ENCODE measurements at regions of chr19 and their contacts with region 1.

Region 1: DNA sequence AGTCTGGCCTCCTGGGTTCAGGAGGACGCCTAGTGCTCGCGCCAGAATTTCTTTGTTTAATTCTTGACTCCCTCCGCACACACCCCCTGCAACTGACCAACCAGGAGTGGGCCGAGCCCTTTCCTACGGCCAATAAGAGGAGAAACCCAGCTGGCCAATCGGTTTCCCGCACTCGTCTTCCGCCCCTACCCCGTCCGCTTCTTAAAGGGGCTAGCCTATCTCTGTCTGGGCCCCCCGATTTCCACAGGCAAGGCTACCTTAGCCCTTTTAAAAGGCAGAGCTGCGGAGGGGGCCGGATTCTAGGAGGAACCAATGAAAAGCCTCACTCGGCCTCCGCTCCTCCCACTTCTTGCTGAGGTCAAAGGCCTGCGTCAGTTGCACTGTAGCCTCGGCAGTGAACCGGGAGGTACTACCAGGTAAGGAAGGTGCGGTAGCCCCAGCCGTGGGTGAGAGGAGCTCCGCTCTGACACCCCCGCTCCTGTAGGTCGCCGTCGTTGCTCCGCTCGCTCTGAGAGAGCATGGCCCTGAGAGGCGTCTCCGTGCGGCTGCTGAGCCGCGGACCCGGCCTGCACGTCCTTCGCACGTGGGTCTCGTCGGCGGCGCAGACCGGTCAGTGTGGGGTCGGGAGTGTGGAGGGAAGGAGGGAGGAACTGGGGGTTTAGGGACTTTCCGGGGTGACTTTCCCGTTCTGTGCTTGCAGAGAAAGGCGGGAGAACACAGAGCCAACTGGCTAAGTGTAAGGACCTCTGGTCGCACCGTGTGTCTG is at the start of gene GCDH:
- DNase-seq: peak; percentile 99
- H3K4me3 ChIP-seq: peak within 1 kb of the TSS; percentile 91
- H3K27ac ChIP-seq: peak within 1 kb of the TSS; percentile 50
- H3K4me1 ChIP-seq: peaks cover 14% of the 10 kb centered on the region
- CTCF ChIP-seq: no peak
- total RNA-seq, gene GCDH: 31.5 and 40.7 TPM in 2 replicates

Region 2: DNA sequence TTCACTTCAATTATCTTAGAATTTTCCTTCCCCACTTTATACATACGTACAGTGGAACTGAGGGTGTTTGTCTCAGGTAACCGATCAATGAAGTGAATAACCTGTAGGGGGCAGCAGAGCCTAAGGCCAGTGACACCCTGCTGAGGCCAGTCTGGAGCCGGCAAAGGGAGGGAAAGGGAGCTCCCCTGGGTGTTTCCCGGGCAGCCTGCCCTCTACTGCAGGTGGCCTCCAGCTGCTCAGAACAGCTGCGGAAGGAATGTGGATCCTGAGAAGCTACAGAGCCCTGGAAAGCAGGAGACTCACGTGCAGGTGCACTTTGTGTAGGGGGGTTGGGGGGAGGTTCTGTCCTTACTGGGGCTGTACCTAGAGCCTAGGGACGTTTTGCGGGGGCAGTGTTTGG is 1093.5 kb before region 1 on chr19:
- CTCF ChIA-PET with region 1: no interaction called
- POLR2A ChIA-PET with region 1: no interaction called
- intact Hi-C with region 1: no loop called
- DNase-seq: peak; percentile 90
- H3K4me3 ChIP-seq: peak overlapping the region; percentile 75
- H3K27ac ChIP-seq: peak overlapping the region; percentile 34
- H3K4me1 ChIP-seq: peaks cover 32% of the 10 kb centered on the region
- CTCF ChIP-seq: peak; percentile 96

Region 3: GRCh38 chr19:12913851-12914690 is 23.1 kb after region 1 on chr19:
- CTCF ChIA-PET with region 1: no interaction called
- POLR2A ChIA-PET with region 1: no interaction called
- intact Hi-C with region 1: loop called (anchors 1 kb)
- DNase-seq: peak; percentile 19
- H3K4me3 ChIP-seq: no peak overlapping the region
- H3K27ac ChIP-seq: no peak overlapping the region
- H3K4me1 ChIP-seq: peaks cover 7% of the 10 kb centered on the region
- CTCF ChIP-seq: no peak

Region 4: DNA sequence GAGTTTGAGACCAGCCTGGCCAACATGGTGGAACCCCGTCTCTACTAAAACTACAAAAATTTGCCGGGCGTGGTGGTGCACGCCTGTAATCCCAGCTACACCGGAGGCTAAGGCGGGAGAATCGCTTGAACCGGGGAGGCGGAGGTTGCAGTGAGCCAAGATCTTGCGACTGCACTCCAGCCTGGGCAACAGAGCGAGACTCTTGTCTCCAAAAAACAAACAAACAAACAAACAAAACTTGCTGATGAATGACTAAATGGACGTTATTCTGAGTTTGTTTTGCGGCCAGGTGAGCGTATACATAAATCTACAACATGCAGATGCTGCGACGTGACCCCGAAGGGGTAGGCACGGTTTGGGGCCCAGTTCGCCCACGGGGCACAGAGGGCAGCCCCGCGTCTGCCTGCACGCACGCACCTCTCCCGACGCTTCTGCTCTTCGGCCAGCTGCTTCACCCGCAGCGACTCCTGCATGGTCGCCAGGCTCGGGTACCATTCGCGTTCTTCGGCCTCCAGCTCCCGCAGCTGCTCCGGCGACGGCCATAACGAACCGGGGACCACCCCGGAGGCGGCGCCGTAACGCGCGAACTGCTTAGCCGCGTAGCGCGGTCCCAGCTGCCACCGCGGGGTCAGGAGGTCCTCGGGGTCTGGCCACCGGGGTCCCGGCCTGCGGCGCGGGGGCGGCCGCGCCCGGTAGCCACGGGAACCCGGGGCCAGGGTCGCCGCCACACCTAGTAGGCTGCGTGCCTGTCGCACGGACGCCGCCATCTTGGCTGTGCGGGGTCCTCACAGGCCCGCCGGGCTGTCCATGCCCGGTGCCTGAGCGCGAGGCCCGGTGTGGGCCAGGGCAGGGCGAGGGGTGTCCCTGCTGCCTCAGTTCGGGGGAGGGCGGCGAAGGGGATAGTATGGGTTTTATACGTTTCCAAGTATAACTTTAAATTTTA is 65.7 kb after region 1 on chr19 and contains the start of gene GADD45GIP1:
- CTCF ChIA-PET with region 1: no interaction called
- POLR2A ChIA-PET with region 1: no interaction called
- intact Hi-C with region 1: loop called (anchors 5 kb)
- DNase-seq: peak; percentile 86
- H3K4me3 ChIP-seq: peak within 1 kb of the TSS; percentile 78
- H3K27ac ChIP-seq: peak within 1 kb of the TSS; percentile 84
- H3K4me1 ChIP-seq: peaks cover 38% of the 10 kb centered on the region
- CTCF ChIP-seq: no peak
- total RNA-seq, gene GADD45GIP1: 29.5 and 43.0 TPM in 2 replicates

Measured in OCI-LY7 (cell line).